ENCODE measurements at regions of chr16 and their contacts with region 1.

Region 1: GRCh38 chr16:2595393-2596205 is 57.8 kb downstream of the PDPK1 start:
- DNase-seq: peak in 1 of 2 donors; percentile 1
- H3K4me3 ChIP-seq: no peak overlapping the region
- H3K27ac ChIP-seq: no peak overlapping the region
- H3K4me1 ChIP-seq: peaks cover 0 to 12% (median 0%) of the 10 kb centered on the region in 4 donors
- H3K27me3 ChIP-seq: no peaks in the 10 kb centered on the region
- CTCF ChIP-seq: no peak
- EP300 ChIP-seq: no peak
- POLR2A ChIP-seq: no peak

Region 2: GRCh38 chr16:2531767-2532493 is 63.7 kb before region 1 on chr16:
- intact Hi-C with region 1: loop called (anchors 10 kb)
- DNase-seq: peak; percentile 99 to 100
- H3K4me3 ChIP-seq: peak overlapping the region; percentile 56 to 73 (median 66)
- H3K27ac ChIP-seq: peak overlapping the region; percentile 90 to 99 (median 97)
- H3K4me1 ChIP-seq: peaks cover 17 to 34% (median 21%) of the 10 kb centered on the region in 4 donors
- H3K27me3 ChIP-seq: no peaks in the 10 kb centered on the region
- CTCF ChIP-seq: no peak
- EP300 ChIP-seq: no peak
- POLR2A ChIP-seq: no peak

Measured in stomach (tissue), 19 donors.